OCI-LY7 (cell line): ENCODE measurements at regions of chr6 and their contacts with region 1.

Region 1: GRCh38 chr6:63764318-63764916 is 128.8 kb downstream of the PHF3 start:
- DNase-seq: peak; percentile 71
- H3K4me3 ChIP-seq: no peak overlapping the region
- H3K27ac ChIP-seq: no peak overlapping the region
- H3K4me1 ChIP-seq: no peaks in the 10 kb centered on the region
- CTCF ChIP-seq: peak; percentile 89

Region 2: GRCh38 chr6:63307581-63308246 is 456.7 kb before region 1 on chr6:
- CTCF ChIA-PET with region 1: no interaction called
- POLR2A ChIA-PET with region 1: no interaction called
- intact Hi-C with region 1: loop called (anchors 2 kb)
- DNase-seq: peak; percentile 54
- H3K4me3 ChIP-seq: no peak overlapping the region
- H3K27ac ChIP-seq: no peak overlapping the region
- H3K4me1 ChIP-seq: no peaks in the 10 kb centered on the region
- CTCF ChIP-seq: peak; percentile 80

Region 3: DNA sequence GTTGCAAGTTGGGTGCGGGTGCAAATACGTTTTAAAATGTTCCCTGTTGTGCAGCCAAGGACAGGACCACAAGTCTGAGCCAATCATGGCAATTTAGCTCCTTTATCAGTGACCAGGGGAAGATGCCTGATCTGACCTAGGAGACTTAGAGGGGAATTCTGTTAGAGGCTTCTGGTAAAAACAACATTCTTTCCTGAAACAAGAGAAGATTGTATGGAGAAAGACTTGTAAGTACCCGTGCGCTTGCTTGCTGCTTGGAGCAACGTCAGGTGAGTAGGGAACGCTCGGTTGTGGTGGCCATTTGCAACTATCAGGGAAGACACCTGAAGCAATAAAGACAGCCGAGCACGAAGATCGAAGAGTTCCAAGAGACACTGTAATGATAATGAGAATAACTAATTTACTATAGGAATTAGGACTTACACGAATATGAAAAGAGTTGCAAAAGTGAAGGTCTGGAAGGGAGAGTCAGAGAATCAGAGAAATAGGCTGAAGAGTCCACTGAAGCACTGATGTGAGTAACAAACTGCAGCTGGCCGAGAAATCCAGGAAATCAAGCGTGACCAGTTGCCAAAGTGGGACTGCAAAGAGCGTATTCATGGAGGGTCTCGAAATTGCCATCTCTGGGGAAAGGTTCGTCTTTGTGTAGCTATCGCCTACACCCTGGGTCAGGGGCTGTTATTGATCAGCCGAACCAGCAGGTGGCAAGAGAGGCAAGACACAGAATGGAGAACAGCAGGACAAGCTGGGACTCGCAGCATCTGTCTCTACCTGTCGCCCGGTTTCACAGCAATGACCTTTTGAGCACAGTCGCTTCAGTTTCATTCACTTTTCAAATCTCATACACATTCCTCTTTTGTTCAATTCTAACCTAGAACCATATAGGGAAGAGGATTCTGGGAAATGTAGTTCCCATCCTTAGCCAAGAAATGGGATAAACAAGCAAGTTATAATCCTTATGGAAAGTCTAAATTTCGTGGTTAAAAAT is 166.1 kb before region 1 on chr6:
- CTCF ChIA-PET with region 1: interaction called, 13 read pairs
- POLR2A ChIA-PET with region 1: interaction called, 6 read pairs
- intact Hi-C with region 1: loop called (anchors 1 kb)
- DNase-seq: peak; percentile 88
- H3K4me3 ChIP-seq: peak overlapping the region; percentile 64
- H3K27ac ChIP-seq: peak overlapping the region; percentile 41
- H3K4me1 ChIP-seq: peaks cover 16% of the 10 kb centered on the region
- CTCF ChIP-seq: peak; percentile 95